Activated CD4-positive, alpha-beta T cell treated with anti-CD3 and anti-CD28 coated beads, Interleukin-2, amount 10 ng/mL, durations not matched to agents 24 days and 14 days (primary cell): ENCODE measurements at regions of chr14 and their contacts with region 1.

Region 1: DNA sequence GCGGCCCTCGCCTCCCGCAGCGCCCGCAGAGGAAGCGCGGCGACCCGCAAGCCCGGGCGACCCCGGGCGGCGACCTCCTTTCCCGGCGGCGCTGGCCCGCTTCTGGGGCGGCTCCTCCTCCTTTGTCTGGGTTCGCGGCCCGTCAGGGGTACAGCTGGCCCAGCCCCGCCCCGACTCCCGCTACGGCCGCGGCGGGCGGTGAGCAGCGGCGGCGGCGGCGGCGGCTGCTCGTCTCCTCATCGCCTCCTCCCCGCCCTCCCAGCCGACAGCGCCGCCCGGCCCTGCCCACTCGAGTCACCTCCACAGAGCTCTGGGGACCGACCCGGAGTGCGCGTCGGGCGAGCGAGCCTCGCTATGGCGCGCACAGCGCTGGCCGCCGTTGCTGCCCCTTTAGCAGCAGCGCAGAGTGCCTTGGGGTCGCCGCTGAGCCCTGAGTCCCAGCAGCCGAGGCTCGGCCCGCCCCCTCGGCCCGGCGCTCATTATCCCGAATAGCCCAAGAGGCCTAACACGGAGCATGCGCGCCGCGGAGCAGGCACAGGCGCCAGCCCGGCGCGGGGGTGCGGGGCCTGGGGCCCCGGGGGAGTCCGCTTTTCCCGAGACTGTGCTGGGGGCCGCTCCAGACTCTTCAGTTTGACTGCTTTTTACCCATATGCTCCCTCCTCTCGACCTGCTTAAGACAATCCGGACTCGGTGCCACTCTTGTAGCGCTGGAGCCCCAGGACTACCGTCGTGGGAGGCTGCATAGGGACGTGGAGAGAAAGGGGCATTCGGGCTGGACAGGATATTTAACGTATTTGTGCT is at the start of gene SOS2:
- DNase-seq: peak; percentile 95
- H3K4me3 Mint-ChIP-seq: peak within 1 kb of the TSS; percentile 92
- H3K27ac Mint-ChIP-seq: peak within 1 kb of the TSS; percentile 90
- H3K4me1 Mint-ChIP-seq: peaks cover 37% of the 10 kb centered on the region
- H3K27me3 Mint-ChIP-seq: no peaks in the 10 kb centered on the region
- total RNA-seq, gene SOS2: 17.7 and 17.8 TPM in 2 replicates

Region 2: DNA sequence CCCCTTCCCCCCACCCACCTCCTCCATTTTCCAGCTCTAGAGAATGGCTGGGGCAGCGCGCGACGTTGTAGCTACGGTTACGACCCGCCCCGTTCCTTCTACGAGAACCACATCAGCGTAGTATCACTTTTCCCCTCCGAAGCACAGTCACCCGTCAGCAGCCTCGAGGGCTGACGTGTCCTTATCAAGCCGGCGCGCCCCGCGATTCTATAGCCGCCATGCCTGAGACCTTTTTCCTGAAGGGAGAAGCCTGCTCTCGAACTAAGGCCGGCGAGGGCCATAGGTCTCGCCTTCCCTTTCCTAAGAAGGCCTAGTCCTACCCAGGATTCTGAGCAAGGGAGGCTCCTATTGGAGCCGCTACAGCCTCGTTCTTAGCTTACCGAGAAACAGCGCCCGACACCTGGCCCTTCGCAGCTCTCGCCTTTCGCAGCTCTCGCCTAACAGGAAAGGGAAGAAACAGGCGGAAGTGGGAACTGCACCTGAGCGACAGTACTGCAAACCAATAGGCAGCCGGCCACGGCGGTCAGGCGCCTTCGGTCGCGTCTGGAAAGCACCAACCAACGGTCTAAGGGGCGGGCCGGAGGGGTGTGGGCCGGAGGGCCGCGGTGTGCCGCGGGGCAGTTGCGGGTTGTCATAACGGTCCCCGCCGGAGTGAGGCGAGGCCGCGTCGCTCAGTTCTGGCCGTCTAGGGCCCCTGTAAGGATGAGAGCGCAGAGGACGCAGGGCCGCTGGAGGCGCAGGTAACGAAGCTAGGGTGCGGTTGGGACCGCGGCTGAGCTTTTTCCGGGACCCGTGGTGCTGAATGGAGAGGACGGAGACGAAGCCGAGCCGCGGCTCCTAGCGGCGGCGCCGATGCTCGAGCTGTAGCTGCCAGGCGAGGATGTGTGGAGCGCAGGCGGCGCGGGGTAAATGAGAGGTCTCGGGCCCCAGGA is 611.2 kb before region 1 on chr14 and contains the starts of genes MGAT2 and RPL36AL:
- intact Hi-C with region 1: loop called (anchors 2 kb)
- DNase-seq: peak; percentile 99
- H3K4me3 Mint-ChIP-seq: peak within 1 kb of the TSS; percentile 96
- H3K27ac Mint-ChIP-seq: peak within 1 kb of the TSS; percentile 96
- H3K4me1 Mint-ChIP-seq: peaks cover 36% of the 10 kb centered on the region
- H3K27me3 Mint-ChIP-seq: no peaks in the 10 kb centered on the region
- total RNA-seq, gene MGAT2: 45.6 and 48.5 TPM in 2 replicates
- total RNA-seq, gene RPL36AL: 221 and 229 TPM in 2 replicates

Region 3: DNA sequence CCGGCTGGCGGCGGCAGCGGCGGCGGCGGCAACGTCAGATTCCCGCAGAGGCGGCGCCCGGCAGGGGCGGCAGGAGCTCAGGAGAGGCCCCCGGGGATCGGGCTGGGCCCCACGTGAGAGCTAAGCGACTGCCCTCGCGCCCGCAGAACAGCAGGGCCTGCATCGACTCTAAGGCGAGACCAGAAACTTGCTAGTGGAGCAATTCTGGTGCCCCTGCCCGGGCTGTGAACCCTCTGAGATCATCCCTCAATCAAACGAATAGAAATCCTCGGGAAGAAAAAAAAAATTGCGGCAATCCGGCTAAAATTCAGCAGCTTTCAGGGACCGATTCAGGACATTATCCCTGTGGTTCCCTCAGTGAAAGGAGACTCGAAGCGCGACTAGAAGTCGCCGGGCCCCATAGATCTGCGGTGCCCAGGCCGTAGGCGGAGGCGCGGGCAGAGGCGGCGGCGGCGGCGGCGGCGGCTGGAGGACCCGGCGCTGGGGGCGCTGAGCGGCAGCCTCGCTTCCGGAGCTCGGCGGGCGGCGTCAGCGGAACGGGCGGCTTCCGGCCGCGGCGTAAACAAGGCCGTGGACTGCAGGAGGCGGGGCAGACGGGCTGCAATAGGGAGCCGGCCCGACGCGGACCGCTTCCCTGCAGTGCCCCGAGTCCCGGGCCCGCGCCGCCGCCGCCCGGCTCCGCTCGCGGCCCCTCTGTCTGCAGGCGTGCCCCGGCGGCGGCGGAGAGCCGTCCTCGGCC is 463.9 kb before region 1 on chr14 and contains the start of gene KLHDC2:
- intact Hi-C with region 1: loop called (anchors 5 kb)
- DNase-seq: peak; percentile 98
- H3K4me3 Mint-ChIP-seq: peak within 1 kb of the TSS; percentile 97
- H3K27ac Mint-ChIP-seq: peak within 1 kb of the TSS; percentile 100
- H3K4me1 Mint-ChIP-seq: peaks cover 31% of the 10 kb centered on the region
- H3K27me3 Mint-ChIP-seq: no peaks in the 10 kb centered on the region
- total RNA-seq, gene KLHDC2: 24.6 and 28.0 TPM in 2 replicates

Region 4: DNA sequence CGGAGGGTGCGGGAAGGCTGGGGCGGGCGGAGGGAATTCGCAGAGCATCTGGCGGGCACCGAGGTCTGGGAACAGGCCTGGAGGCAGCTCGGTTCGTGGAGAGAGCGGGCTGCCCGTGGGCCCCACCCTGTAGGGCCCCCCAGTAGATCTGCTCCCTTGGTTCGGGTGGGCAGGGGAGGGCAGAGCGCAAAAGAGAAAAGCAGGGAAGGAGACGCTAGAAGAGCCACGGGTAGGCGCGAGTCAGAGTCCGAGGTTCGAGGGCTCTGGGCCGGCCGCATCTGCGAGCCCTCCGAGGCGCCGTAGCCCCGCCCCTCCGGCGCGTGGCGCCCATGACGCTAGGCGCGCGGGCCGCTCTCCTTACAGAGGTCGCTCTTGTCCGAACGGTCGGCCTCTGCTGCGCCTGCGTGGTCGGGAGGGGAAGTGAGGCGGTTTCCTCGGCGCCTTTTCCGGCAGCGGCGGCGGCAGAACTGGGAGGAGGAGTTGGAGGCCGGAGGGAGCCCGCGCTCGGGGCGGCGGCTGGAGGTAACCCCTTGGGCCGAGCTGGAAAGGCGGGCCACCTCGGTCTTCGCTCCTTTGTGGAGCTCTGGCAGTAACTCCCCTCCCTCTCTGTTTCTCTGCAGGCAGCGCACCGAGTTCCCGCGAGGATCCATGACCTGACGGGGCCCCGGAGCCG is 338.9 kb before region 1 on chr14 and contains the start of gene ARF6:
- intact Hi-C with region 1: loop called (anchors 2 kb)
- DNase-seq: peak; percentile 99
- H3K4me3 Mint-ChIP-seq: peak within 1 kb of the TSS; percentile 96
- H3K27ac Mint-ChIP-seq: peak within 1 kb of the TSS; percentile 100
- H3K4me1 Mint-ChIP-seq: peaks cover 21% of the 10 kb centered on the region
- H3K27me3 Mint-ChIP-seq: no peaks in the 10 kb centered on the region
- total RNA-seq, gene ARF6: 154 and 160 TPM in 2 replicates

Region 5: DNA sequence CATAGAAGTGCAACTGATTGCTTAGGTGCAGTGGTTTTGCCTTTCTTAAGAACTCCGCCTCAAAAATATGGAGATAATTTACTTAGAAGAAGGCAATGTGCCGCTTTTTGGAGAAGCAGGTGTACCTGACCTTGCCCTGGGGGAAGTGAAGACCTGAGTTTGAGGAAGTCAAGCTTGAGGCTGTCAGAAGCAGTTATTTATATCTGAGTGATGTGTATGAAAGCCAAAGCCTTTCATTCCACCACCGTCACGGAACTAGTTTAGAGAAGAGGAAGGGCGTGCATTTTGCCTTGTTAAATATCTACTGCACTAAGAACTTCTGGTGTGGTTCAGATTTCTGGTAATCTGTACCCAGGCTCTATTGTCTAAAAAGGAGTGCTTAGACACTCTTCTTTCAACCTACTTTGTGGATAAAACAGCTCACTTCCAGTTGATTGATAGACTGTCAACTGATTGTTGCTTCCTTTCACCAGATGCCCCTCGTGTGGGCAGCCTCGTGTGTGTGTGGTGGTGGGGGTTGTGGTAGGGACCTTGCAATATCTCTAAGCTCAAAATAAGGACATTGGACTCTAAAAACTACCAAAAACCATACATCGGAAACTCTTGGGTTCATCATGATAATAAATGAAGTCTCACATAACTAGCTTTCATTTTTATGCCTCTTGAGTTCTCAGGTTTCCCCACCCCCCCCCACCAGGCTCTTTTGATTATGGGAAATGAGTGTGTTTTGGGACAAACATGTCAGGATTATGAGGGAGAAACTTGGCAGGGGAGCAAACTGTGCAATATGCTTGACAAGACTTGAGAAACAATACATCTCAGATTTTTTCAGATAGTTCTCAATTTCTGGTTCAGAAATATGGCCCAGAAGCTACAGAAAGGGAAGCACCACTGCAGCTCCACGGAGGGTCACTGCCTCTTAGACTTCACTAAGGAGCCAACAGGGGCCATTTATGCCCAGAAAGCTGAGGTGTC is 260.2 kb before region 1 on chr14:
- intact Hi-C with region 1: no loop called
- DNase-seq: peak; percentile 88
- H3K4me3 Mint-ChIP-seq: peak overlapping the region; percentile 82
- H3K27ac Mint-ChIP-seq: peak overlapping the region; percentile 99
- H3K4me1 Mint-ChIP-seq: peaks cover 58% of the 10 kb centered on the region
- H3K27me3 Mint-ChIP-seq: no peaks in the 10 kb centered on the region

Region 6: GRCh38 chr14:50285861-50286260 is 54.2 kb after region 1 on chr14:
- intact Hi-C with region 1: no loop called
- DNase-seq: no peak
- H3K4me3 Mint-ChIP-seq: no peak overlapping the region
- H3K27ac Mint-ChIP-seq: no peak overlapping the region
- H3K4me1 Mint-ChIP-seq: no peaks in the 10 kb centered on the region
- H3K27me3 Mint-ChIP-seq: no peaks in the 10 kb centered on the region

Region 7: GRCh38 chr14:50311975-50312733 is 80.5 kb after region 1 on chr14 and contains the starts of genes DMAC2L and L2HGDH:
- intact Hi-C with region 1: loop called (anchors 2 kb)
- DNase-seq: peak; percentile 98
- H3K4me3 Mint-ChIP-seq: peak within 1 kb of the TSS; percentile 96
- H3K27ac Mint-ChIP-seq: peak within 1 kb of the TSS; percentile 99
- H3K4me1 Mint-ChIP-seq: peaks cover 39% of the 10 kb centered on the region
- H3K27me3 Mint-ChIP-seq: no peaks in the 10 kb centered on the region
- total RNA-seq, gene DMAC2L: 16.3 and 18.8 TPM in 2 replicates
- total RNA-seq, gene L2HGDH: 16.8 and 18.0 TPM in 2 replicates

Region 8: DNA sequence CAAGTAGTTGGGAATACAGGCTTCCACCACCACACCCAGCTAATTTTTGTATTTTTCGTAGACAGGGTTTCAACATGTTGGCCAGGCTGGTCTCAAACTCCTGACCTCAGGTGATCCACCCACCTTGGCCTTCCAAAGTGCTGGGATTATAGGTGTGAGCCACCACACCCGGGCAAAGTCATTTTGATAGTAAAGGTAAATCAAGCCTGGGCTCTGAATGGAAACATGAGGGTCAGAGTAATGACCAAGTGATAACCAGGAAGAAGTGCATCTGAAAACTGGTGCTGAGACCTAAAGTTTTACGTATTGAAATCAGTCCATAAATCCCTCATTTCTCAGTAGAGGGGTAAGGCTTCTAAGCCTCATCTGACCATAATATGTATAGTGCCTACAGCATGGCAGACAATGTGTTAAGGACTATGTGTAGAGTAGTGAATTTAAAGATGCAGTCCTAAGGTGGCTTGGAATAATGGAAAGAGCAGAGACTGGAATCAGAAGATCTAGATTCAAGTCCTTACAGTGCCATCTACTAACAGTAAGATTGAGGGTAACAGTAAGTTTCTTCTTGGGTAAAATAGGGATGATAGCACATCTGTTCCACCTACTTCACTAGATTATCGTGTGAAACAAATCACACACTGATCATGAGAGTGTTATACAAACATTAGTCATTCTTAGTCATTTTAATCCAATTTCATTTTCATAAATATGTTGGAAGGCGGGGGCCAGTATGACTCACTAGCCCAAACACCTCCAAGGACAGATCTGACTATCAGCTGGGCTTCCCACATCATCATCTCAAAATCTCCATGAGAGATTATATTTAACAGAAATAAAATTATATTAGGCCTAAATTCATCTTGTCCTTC is 289.5 kb after region 1 on chr14:
- intact Hi-C with region 1: loop called (anchors 1 kb)
- DNase-seq: peak; percentile 77
- H3K4me3 Mint-ChIP-seq: peak overlapping the region; percentile 67
- H3K27ac Mint-ChIP-seq: peak overlapping the region; percentile 94
- H3K4me1 Mint-ChIP-seq: peaks cover 39% of the 10 kb centered on the region
- H3K27me3 Mint-ChIP-seq: no peaks in the 10 kb centered on the region